Motor neuron (in vitro differentiated cells): ENCODE measurements at regions of chr11 and their contacts with region 1.

Region 1: GRCh38 chr11:123559523-123559955 is 94.9 kb downstream of the SCN3B start:
- ATAC-seq: peak; percentile 13 to 54 (median 26)
- H3K4me3 ChIP-seq: peak overlapping the region; percentile 15 to 46 (median 33)
- H3K27ac ChIP-seq: peak overlapping the region; percentile 89 to 96
- H3K4me1 ChIP-seq: peaks cover 38 to 48% of the 10 kb centered on the region in 2 donors

Region 2: GRCh38 chr11:123509737-123510578 is 49.6 kb before region 1 on chr11:
- in situ Hi-C with region 1: loop called in 1 of 9 experiments (anchors 10 kb)
- ATAC-seq: peak in 5 of 8 experiments; percentile 89 to 93 (median 91)
- H3K4me3 ChIP-seq: no peak overlapping the region
- H3K27ac ChIP-seq: peak overlapping the region; percentile 82 to 90
- H3K4me1 ChIP-seq: peaks cover 36 to 44% of the 10 kb centered on the region in 2 donors

Region 3: DNA sequence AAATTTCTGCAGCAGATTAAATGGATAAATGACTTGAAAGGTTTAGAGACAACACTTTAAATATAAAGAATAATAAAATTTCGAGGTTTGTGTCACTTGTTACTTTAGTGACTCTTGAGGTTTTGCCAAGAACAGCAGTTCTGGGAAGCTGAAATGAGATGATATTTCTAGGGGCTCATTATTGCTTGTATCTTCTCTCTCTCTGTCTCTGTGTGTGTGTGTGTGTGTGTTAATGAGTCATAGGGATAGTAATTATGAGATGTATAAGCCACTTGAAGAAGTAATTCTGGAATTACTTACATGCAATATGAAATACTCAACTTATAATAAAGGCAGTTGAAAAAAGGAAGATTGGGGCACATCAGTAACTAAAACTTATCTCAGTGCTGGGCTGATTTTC is 491.2 kb after region 1 on chr11:
- in situ Hi-C with region 1: no loop called
- ATAC-seq: peak in 1 of 8 experiments; percentile 63
- H3K4me3 ChIP-seq: no peak overlapping the region
- H3K27ac ChIP-seq: no peak overlapping the region
- H3K4me1 ChIP-seq: no peaks in the 10 kb centered on the region